Ascending aorta (tissue), 2 donors: ENCODE measurements at regions of chr1 and their contacts with region 1.

Region 1: GRCh38 chr1:25247024-25247828 is at the start of gene RSRP1:
- DNase-seq: peak; percentile 97 to 100
- H3K4me3 ChIP-seq: peak within 1 kb of the TSS; percentile 69 to 99
- H3K27ac ChIP-seq: peak within 1 kb of the TSS; percentile 96 to 100
- H3K4me1 ChIP-seq: peaks cover 10 to 22% of the 10 kb centered on the region in 2 donors
- H3K27me3 ChIP-seq: no peaks in the 10 kb centered on the region
- CTCF ChIP-seq: peak in 1 of 3 experiments; percentile 26
- total RNA-seq, gene RSRP1: 126 TPM

Region 2: GRCh38 chr1:25182629-25183028 is 64.6 kb before region 1 on chr1:
- intact Hi-C with region 1: no loop called
- DNase-seq: no peak
- H3K4me3 ChIP-seq: no peak overlapping the region
- H3K27ac ChIP-seq: no peak overlapping the region
- H3K4me1 ChIP-seq: no peaks in the 10 kb centered on the region
- H3K27me3 ChIP-seq: no peaks in the 10 kb centered on the region
- CTCF ChIP-seq: no peak

Region 3: GRCh38 chr1:25204797-25205480 is 42.3 kb before region 1 on chr1:
- intact Hi-C with region 1: no loop called
- DNase-seq: no peak
- H3K4me3 ChIP-seq: no peak overlapping the region
- H3K27ac ChIP-seq: no peak overlapping the region
- H3K4me1 ChIP-seq: no peaks in the 10 kb centered on the region
- H3K27me3 ChIP-seq: no peaks in the 10 kb centered on the region
- CTCF ChIP-seq: peak; percentile 59 to 74 (median 74)

Region 4: DNA sequence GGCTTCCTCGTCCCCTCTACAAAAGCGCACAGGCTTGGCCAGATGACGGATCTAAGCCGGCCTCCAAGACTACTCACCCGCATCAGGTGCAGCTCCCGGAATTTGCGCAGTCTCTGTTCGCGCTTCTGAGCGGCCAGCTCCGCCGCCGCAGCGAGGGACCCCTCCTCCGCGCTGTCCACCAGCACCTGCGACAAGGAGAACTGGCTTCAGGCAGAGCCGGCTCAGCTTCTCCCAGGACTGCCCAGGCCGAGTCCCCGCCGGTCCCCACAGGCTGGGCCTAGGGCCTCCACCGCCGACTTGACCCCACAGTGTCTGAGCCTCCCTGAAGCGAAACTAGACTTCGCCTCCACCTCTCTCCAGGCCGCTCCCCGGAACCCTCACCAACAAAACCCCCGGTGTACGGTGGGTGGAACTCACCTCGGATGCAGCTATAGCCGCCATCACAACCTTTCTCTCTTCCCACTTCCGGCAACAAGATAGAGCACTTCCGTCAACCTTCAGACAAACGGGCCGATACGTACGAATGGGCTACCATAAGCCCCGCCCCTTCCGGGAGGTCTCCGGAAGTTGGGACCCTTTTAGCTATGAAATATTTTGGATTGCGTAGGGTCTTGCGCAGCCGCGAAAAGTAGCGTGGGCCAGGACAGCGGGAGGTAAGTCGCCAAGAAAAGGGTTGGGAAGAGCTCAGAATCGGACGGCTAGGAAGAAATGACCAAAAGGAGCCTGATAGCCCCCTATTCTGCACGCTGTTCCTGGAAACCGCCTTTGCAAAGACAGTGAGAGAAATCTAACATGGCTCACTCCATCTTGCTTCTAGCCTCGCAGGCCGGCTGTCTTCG is 15.0 kb before region 1 on chr1 and contains the start of gene SYF2:
- intact Hi-C with region 1: loop called (anchors 1 kb)
- DNase-seq: peak; percentile 75 to 96
- H3K4me3 ChIP-seq: peak within 1 kb of the TSS; percentile 92 to 98
- H3K27ac ChIP-seq: peak within 1 kb of the TSS; percentile 81 to 93
- H3K4me1 ChIP-seq: peaks cover 10 to 18% of the 10 kb centered on the region in 2 donors
- H3K27me3 ChIP-seq: no peaks in the 10 kb centered on the region
- CTCF ChIP-seq: no peak
- total RNA-seq, gene SYF2: 14.3 TPM

Region 5: GRCh38 chr1:25338188-25338981 is 91.2 kb after region 1 on chr1 and contains the start of gene TMEM50A:
- intact Hi-C with region 1: loop called (anchors 2 kb)
- DNase-seq: peak; percentile 70 to 94
- H3K4me3 ChIP-seq: peak within 1 kb of the TSS; percentile 85 to 98
- H3K27ac ChIP-seq: peak within 1 kb of the TSS; percentile 98 to 100
- H3K4me1 ChIP-seq: peaks cover 7 to 15% of the 10 kb centered on the region in 2 donors
- H3K27me3 ChIP-seq: no peaks in the 10 kb centered on the region
- CTCF ChIP-seq: no peak
- total RNA-seq, gene TMEM50A: 143 TPM

Region 6: DNA sequence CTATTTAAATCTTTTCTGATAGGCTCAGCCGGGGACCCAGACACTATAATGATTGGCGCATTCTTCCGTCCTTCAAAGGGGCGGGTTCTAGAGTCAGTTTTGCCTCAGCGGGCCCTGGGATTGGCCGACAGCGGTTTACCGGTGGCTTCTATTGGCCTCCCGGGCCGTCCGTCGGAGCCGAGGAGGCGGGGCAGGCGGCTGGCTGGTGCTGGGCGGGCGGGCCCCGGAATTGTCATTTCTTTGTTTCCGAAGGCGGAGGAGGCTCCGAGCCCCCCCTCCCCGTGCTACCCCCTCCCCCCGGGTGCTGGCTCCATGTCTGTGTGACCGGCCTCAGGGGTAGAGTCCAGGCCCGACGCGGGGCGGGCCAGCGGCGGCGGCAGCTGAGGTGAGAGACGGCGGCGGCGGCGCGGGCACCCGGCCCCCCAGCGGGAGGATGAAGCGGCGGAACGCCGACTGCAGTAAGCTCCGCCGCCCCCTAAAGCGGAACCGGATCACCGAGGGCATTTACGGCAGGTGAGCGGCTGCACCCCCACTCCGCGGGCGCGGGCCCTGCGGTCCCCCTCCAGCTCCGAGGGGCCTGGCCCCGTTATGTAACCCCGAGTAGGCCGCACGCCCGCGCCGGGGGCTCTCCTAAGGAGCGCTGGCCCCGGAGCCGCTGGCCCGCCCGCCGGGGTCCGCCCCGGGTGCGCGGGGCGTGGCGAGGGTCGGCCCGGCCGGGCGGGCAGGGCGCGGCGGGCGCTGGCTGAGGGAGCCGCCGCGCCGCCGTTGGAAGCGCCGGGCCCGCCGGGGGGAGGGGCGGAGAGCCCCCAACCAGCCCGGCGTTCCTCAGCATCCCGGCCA is 183.7 kb after region 1 on chr1 and contains the start of gene MACO1:
- intact Hi-C with region 1: loop called (anchors 5 kb)
- DNase-seq: peak; percentile 91 to 98
- H3K4me3 ChIP-seq: peak within 1 kb of the TSS; percentile 97 to 99
- H3K27ac ChIP-seq: peak within 1 kb of the TSS; percentile 92 to 98
- H3K4me1 ChIP-seq: peaks cover 4 to 18% of the 10 kb centered on the region in 2 donors
- H3K27me3 ChIP-seq: no peaks in the 10 kb centered on the region
- CTCF ChIP-seq: no peak
- total RNA-seq, gene MACO1: 49.2 TPM

Region 7: GRCh38 chr1:25608488-25609178 is 361.4 kb after region 1 on chr1:
- intact Hi-C with region 1: loop called (anchors 5 kb)
- DNase-seq: peak; percentile 45 to 93
- H3K4me3 ChIP-seq: peak overlapping the region; percentile 2 to 21
- H3K27ac ChIP-seq: no peak overlapping the region
- H3K4me1 ChIP-seq: peaks cover 0 to 2% of the 10 kb centered on the region in 2 donors
- H3K27me3 ChIP-seq: no peaks in the 10 kb centered on the region
- CTCF ChIP-seq: peak; percentile 52 to 81 (median 59)

Region 8: DNA sequence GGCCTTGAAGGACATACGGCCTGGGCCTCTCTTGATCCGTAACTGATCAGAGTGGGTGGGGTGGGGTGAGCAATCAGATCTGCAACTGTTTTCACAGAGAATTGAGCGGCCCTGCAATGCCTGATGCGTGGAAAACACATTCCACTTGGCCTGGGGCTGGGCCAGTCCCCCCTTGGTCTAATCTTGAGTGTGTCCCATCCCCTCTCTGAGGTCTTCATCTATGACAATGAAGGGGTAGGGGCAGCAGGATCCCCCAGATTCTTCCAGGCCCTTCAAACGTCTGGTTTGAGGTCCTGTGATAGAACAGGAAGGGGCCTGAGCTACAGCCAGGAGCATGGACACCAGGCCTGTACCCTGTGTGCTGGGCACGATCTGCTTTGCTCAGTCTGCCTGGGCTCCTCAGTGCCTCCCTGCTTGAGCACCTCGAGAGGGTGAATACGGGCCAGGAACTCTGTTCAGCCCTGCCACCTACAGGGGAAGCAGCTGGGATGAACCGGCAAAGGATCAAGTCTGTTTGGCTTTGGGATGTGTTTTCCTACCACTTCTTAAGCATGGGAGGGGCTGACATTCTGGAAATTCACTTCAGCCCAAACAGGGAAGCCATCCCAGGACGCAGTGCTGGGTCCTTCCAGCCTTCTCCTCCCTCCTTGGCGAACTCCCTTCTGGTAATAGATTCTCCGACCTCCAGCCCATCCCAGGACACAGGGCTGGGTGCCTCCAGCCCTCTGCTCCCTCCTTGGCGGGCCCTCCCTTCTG is 496.8 kb after region 1 on chr1:
- intact Hi-C with region 1: loop called (anchors 5 kb)
- DNase-seq: peak; percentile 25 to 83
- H3K4me3 ChIP-seq: peak overlapping the region in 1 of 2 donors; percentile 23
- H3K27ac ChIP-seq: peak overlapping the region; percentile 85 to 93
- H3K4me1 ChIP-seq: peaks cover 11 to 26% of the 10 kb centered on the region in 2 donors
- H3K27me3 ChIP-seq: no peaks in the 10 kb centered on the region
- CTCF ChIP-seq: peak; percentile 32 to 55 (median 36)